ENCODE measurements at regions of chr20 and their contacts with region 1.

Region 1: GRCh38 chr20:22333885-22334545 is 250.4 kb downstream of the FOXA2 start:
- DNase-seq: peak in 3 of 5 donors; percentile 34 to 44 (median 36)
- ATAC-seq: peak in 3 of 4 donors; percentile 64 to 80 (median 66)
- H3K4me3 ChIP-seq: no peak overlapping the region
- H3K27ac ChIP-seq: no peak overlapping the region
- H3K4me1 ChIP-seq: no peaks in the 10 kb centered on the region
- H3K27me3 ChIP-seq: peaks cover 0 to 82% (median 4%) of the 10 kb centered on the region in 9 donors
- CTCF ChIP-seq: peak; percentile 54 to 79 (median 66)
- POLR2A ChIP-seq: no peak

Region 2: DNA sequence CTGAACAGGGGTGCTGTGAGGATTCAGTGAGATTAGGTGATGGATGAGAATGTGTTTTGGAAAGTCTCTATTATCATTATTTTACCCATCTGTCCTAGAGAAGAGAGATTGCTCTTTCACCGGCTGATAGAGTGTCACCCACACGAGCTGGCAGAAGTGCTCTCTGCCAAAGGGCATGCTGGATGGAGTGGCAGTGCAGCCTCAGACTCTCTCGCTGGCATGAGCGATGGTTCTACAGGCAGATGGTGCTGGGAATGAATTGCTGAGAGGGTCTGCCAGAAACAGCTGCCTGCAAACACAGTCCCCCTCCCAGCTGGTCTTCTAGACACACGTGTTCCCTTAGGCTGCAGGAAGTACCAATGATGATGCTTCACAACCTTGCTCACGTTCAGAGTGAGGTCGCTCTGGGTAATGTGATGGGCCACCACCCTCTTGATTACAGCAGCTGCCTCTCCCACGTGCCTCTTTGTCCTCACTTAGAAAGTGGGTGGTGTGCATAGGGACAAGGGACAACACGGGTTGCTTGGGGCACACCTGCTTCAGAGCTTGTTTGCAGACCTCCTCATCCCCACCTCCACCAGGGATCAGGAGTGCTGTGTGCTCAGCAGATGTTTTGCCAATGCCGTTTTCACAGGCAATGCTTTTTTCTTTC is 165.6 kb after region 1 on chr20:
- intact Hi-C with region 1: no loop called
- DNase-seq: no peak
- ATAC-seq: no peak
- H3K4me3 ChIP-seq: no peak overlapping the region
- H3K27ac ChIP-seq: no peak overlapping the region
- H3K4me1 ChIP-seq: no peaks in the 10 kb centered on the region
- H3K27me3 ChIP-seq: peaks cover 0 to 35% (median 5%) of the 10 kb centered on the region in 9 donors
- CTCF ChIP-seq: no peak
- POLR2A ChIP-seq: no peak

Region 3: GRCh38 chr20:23320317-23320716 is 986.3 kb after region 1 on chr20:
- intact Hi-C with region 1: loop called in 1 of 10 experiments (anchors 10 kb)
- DNase-seq: no peak
- ATAC-seq: no peak
- H3K4me3 ChIP-seq: no peak overlapping the region
- H3K27ac ChIP-seq: no peak overlapping the region
- H3K4me1 ChIP-seq: peaks cover 0 to 9% (median 0%) of the 10 kb centered on the region in 12 donors
- H3K27me3 ChIP-seq: no peaks in the 10 kb centered on the region
- CTCF ChIP-seq: peak in 7 of 12 donors; percentile 15 to 42 (median 30)
- POLR2A ChIP-seq: no peak